Heart left ventricle (tissue), 16 donors: ENCODE measurements at regions of chr3 and their contacts with region 1.

Region 1: GRCh38 chr3:138230525-138230924 is 43.4 kb downstream of the ARMC8 start:
- DNase-seq: no peak
- ATAC-seq: no peak
- H3K4me3 ChIP-seq: no peak overlapping the region
- H3K27ac ChIP-seq: no peak overlapping the region
- H3K4me1 ChIP-seq: peaks cover 0 to 7% (median 0%) of the 10 kb centered on the region in 12 donors
- H3K27me3 ChIP-seq: no peaks in the 10 kb centered on the region
- CTCF ChIP-seq: no peak
- POLR2A ChIP-seq: no peak

Region 2: DNA sequence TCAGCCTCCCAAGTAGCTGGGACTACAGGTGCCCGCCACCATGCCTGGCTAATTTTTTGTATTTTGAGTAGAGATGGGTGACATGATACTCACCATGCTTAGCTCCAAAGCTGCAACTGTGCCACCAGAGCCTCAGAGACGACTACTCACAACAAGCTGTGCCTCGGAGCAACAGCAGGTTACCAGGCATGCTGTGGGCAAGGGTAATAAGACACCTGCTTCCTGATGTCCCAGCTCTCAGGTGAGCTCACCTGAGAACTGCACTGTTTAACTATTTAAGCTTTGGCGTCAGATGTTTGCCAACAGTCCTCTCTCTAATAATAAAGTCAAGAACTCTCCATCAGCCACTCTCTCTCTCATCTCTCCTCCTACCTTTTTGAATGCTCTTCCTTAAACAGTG is 122.4 kb before region 1 on chr3:
- intact Hi-C with region 1: no loop called
- DNase-seq: no peak
- ATAC-seq: no peak
- H3K4me3 ChIP-seq: no peak overlapping the region
- H3K27ac ChIP-seq: no peak overlapping the region
- H3K4me1 ChIP-seq: peaks cover 0 to under 1% (median 0%) of the 10 kb centered on the region in 12 donors
- H3K27me3 ChIP-seq: no peaks in the 10 kb centered on the region
- CTCF ChIP-seq: no peak
- POLR2A ChIP-seq: no peak

Region 3: DNA sequence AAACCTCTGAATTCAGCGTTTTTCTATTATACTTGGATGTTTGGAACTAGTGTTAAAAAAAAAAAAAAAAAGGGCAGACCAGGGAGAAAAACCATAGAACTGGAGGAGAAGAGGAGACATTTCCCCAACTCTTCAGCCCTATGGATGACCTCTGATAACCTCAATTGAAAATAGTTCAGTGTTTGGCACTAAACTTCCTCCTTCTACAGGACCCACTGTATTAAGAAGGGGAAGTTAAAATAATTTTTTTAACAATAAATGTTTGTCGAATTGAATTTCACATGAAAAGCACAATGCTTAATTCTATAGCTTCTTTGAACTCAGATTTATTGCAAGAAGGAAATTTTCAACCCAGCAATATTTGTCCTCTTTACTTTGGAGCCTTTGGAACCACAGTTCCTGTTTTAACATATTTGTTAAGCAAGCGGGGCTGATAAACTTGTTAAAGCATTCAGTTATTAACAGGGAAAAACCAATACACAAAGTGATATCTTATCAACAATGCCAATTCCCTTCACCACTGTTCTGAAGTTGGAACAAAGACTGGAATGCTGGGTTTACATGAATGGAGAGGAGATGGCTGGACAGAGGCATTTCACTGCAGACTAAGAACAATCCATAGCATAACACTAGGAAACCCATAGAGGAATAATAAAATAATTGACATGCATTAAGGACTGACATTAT is 95.2 kb before region 1 on chr3:
- intact Hi-C with region 1: no loop called
- DNase-seq: no peak
- ATAC-seq: peak in 1 of 4 donors; percentile 49
- H3K4me3 ChIP-seq: no peak overlapping the region
- H3K27ac ChIP-seq: peak overlapping the region in 1 of 12 donors; percentile 82
- H3K4me1 ChIP-seq: peaks cover 0 to 40% (median 0%) of the 10 kb centered on the region in 12 donors
- H3K27me3 ChIP-seq: no peaks in the 10 kb centered on the region
- CTCF ChIP-seq: no peak
- POLR2A ChIP-seq: no peak

Region 4: DNA sequence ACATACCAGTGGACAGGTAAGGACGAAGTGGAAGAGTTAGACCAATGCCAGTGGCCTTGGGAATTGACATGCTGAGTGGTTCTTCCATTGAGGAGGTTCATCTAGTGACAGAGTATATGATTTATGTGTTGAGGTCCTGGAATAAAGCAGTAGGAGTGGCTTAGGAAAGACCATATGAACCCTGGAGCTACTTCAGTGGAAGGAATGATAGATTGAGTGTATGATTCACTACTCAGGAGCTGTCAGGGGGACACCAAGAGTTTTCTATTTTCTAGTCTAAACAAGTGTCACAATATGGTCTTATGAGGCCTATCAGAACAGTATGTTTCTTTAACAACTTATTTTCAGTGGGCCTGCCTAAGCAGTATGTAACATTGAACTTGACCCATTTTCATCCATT is 35.2 kb after region 1 on chr3:
- intact Hi-C with region 1: loop called in 1 of 10 experiments (anchors 5 kb)
- DNase-seq: no peak
- ATAC-seq: no peak
- H3K4me3 ChIP-seq: no peak overlapping the region
- H3K27ac ChIP-seq: no peak overlapping the region
- H3K4me1 ChIP-seq: no peaks in the 10 kb centered on the region
- H3K27me3 ChIP-seq: no peaks in the 10 kb centered on the region
- CTCF ChIP-seq: no peak
- POLR2A ChIP-seq: no peak

Region 5: DNA sequence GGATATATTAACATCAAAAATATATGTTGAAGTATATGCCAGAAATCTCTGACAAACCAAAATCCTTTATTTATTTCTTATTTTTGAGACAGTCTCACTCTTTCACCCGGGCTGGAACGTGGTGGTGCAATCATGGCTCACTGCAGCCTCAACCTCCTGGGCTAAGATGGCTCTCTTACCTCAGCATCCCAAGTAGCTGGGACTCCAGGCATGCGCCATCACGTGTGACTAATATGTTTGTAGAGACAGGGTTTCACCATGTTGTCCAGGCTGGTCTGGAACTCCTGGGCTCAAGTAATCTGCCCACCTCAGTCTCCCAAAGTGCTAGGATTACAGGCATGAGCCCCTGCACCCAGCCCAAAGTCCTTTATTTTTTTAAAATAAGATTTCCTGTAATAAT is 389.9 kb after region 1 on chr3:
- intact Hi-C with region 1: loop called in 1 of 10 experiments (anchors 5 kb)
- DNase-seq: no peak
- ATAC-seq: no peak
- H3K4me3 ChIP-seq: no peak overlapping the region
- H3K27ac ChIP-seq: no peak overlapping the region
- H3K4me1 ChIP-seq: no peaks in the 10 kb centered on the region
- H3K27me3 ChIP-seq: no peaks in the 10 kb centered on the region
- CTCF ChIP-seq: no peak
- POLR2A ChIP-seq: no peak

Region 6: DNA sequence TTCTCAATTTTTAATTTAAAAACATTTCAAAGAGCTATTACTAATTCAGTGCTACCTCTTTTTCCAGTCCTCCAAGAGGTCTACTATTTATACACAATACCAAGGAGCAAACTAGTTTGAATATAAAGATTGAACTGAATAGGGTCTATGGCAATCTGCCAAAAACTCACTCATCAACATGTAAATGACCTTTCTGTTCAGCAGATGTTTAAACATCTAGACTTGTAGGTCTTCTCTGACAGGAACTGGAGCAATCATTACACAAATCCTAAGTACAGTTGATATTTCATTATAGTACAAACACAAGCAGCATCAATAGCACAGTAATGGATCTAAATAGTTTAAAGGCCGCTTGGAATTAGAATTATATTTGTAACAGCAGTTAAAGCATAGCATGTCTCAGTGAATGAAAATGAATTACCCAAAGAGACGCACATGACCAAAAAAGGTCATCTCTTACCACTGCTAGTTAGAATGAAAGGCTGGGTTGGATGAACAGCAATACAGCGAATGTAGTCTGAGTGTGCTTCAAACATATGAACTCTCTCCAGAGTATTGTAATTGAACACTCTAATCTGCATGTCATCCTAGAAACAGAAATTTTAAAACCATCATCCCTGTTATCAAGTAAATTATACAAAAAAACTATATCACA is 1148.2 kb after region 1 on chr3:
- intact Hi-C with region 1: loop called in 1 of 10 experiments (anchors 10 kb)
- DNase-seq: no peak
- ATAC-seq: no peak
- H3K4me3 ChIP-seq: no peak overlapping the region
- H3K27ac ChIP-seq: no peak overlapping the region
- H3K4me1 ChIP-seq: peaks cover 0 to 15% (median 0%) of the 10 kb centered on the region in 12 donors
- H3K27me3 ChIP-seq: no peaks in the 10 kb centered on the region
- CTCF ChIP-seq: no peak
- POLR2A ChIP-seq: no peak